ENCODE measurements at regions of chr1 and their contacts with region 1.

Region 1: GRCh38 chr1:9292361-9293240 is at the start of gene SPSB1:
- DNase-seq: peak; percentile 86
- ATAC-seq: peak; percentile 68
- H3K4me3 ChIP-seq: peak within 1 kb of the TSS; percentile 41 to 70 (median 59)
- H3K4me3 Mint-ChIP-seq: peak within 1 kb of the TSS; percentile 64
- H3K27ac ChIP-seq: peak within 1 kb of the TSS in 1 of 2 donors; percentile 47
- H3K27ac Mint-ChIP-seq: peak within 1 kb of the TSS; percentile 72
- H3K4me1 ChIP-seq: peaks cover 6 to 23% of the 10 kb centered on the region in 2 donors
- H3K4me1 Mint-ChIP-seq: peaks cover 7% of the 10 kb centered on the region
- H3K27me3 ChIP-seq: no peaks in the 10 kb centered on the region
- H3K27me3 Mint-ChIP-seq: no peaks in the 10 kb centered on the region
- CTCF ChIP-seq: no peak
- total RNA-seq, gene SPSB1: 8.9 and 9.4 TPM in 2 replicates

Region 2: DNA sequence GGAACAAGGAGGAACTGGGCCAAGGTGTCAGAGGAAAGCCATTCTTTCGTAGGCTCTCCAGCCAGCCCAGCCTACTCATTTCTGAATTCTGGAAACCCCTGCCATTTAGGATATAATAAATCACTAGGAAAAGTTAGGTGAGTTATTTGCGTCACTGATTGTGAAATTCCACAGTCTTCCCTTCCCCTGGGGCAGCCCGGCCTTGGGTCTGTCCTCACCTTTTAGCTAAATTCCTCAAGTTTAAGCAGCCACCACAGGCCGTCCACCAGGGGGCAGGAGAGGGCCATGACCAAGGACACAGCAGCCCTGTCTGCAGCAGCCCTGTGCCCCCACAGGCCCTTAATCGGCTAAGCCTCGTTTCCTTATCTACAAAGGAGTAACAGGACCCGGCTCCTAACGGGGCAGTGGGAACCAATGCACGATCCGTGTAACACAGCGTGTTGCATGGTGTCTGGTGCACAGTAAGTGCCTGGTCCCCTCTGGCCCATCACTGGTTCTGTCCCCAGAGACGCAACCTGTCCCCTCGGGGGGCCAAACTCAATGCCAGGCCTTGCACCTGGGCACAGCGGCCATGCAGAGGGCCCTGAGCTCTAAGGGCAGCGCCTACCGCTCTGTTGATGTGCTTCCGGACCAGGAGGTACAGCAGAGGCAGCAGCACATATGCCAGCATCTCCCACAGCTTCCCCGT is 181.8 kb before region 1 on chr1:
- CTCF ChIA-PET with region 1: interaction called, 15 read pairs
- POLR2A ChIA-PET with region 1: no interaction called
- intact Hi-C with region 1: no loop called
- DNase-seq: peak; percentile 85
- ATAC-seq: peak; percentile 95
- H3K4me3 ChIP-seq: no peak overlapping the region
- H3K4me3 Mint-ChIP-seq: no peak overlapping the region
- H3K27ac ChIP-seq: no peak overlapping the region
- H3K27ac Mint-ChIP-seq: no peak overlapping the region
- H3K4me1 ChIP-seq: peaks cover 0 to 5% of the 10 kb centered on the region in 2 donors
- H3K4me1 Mint-ChIP-seq: peaks cover 2% of the 10 kb centered on the region
- H3K27me3 ChIP-seq: no peaks in the 10 kb centered on the region
- H3K27me3 Mint-ChIP-seq: no peaks in the 10 kb centered on the region
- CTCF ChIP-seq: peak; percentile 91

Region 3: DNA sequence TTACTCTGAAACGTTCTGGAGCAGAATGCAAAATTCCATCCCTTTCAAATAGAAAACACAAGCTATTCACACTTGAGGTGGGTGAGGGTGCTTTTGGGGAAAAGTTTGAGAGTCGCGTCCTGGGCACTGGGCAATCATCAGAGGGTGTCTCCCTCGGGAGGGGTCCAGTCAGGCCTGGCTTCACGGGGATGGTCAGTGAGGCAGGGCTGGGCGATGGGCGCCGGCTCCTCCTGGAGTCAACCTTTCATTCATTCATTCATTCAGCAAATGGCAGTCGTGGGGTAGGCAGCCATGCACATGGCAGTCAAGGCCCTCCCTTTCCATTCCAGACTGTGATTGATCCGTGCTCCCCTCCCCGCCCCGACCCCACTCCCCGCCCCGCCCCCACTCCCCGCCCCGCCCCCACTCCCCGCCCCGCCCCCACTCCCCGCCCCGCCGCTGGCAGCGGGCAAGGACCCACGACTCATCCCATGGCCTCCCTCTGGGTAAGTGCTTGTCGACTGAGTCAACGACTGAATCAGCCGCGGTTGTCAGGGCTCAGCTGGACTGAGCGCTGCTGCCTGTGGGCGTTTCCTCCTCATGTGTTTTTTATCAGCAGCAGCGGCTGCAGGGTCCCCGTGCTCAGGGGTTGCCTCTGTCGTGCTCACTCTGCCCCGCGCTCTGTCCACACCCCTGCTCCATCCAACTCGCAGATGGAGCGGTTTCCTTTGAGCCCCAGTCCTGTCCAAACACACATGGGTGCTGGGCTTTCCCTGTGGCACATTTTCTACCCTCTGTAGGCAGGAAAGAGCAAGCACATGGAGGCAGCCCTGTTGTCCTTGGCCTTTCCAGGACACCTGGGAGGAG is 12.4 kb before region 1 on chr1:
- CTCF ChIA-PET with region 1: interaction called, 10 read pairs
- POLR2A ChIA-PET with region 1: no interaction called
- intact Hi-C with region 1: no loop called
- DNase-seq: no peak
- ATAC-seq: no peak
- H3K4me3 ChIP-seq: no peak overlapping the region
- H3K4me3 Mint-ChIP-seq: no peak overlapping the region
- H3K27ac ChIP-seq: no peak overlapping the region
- H3K27ac Mint-ChIP-seq: no peak overlapping the region
- H3K4me1 ChIP-seq: peaks cover 0 to 20% of the 10 kb centered on the region in 2 donors
- H3K4me1 Mint-ChIP-seq: peaks cover 23% of the 10 kb centered on the region
- H3K27me3 ChIP-seq: peaks cover 0 to 14% (median 4%) of the 10 kb centered on the region in 4 experiments
- H3K27me3 Mint-ChIP-seq: peaks cover 14% of the 10 kb centered on the region
- CTCF ChIP-seq: no peak

Region 4: DNA sequence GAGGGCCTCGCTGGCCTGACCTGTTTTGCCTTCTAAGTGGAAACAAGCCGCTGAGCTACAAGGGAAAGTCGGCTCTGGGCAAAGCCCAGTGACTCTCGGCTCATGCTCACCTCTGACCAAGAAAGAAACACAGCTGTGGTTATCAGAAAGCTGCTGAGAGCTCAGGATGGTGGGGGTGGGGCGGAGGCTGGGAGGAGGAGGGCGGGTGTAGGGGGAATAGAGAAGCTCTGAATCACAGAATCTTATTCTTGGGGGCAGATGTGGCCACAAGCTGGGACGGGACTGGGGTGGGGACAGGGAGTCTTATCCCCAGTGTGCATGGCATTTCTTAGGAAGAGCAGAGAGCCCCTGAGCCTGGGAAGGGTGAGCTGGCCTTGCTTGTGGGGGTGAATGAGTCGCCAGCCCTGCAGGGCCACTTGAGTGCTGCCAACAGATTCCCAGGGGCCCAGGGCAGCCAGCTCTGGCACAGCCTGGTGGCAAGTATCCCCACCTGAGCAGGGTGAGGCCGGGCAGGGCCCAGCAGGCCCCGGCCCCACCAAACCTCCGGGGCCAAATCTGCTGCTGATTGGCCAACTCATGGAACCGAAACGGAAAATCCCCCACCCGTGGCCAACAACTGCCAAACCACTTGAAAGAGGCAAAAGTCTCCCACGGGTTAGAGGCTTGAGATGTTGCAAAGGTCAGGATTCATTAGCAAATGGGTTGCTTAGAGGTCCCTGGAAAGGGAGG is 120.7 kb after region 1 on chr1:
- CTCF ChIA-PET with region 1: interaction called, 13 read pairs
- POLR2A ChIA-PET with region 1: interaction called, 10 read pairs
- intact Hi-C with region 1: loop called (anchors 5 kb)
- DNase-seq: peak; percentile 72
- ATAC-seq: peak; percentile 73
- H3K4me3 ChIP-seq: peak overlapping the region in 3 of 5 experiments; percentile 12 to 27 (median 12)
- H3K4me3 Mint-ChIP-seq: peak overlapping the region; percentile 49
- H3K27ac ChIP-seq: peak overlapping the region; percentile 41 to 67
- H3K27ac Mint-ChIP-seq: peak overlapping the region; percentile 85
- H3K4me1 ChIP-seq: peaks cover 35 to 59% of the 10 kb centered on the region in 2 donors
- H3K4me1 Mint-ChIP-seq: peaks cover 51% of the 10 kb centered on the region
- H3K27me3 ChIP-seq: no peaks in the 10 kb centered on the region
- H3K27me3 Mint-ChIP-seq: no peaks in the 10 kb centered on the region
- CTCF ChIP-seq: no peak

Region 5: DNA sequence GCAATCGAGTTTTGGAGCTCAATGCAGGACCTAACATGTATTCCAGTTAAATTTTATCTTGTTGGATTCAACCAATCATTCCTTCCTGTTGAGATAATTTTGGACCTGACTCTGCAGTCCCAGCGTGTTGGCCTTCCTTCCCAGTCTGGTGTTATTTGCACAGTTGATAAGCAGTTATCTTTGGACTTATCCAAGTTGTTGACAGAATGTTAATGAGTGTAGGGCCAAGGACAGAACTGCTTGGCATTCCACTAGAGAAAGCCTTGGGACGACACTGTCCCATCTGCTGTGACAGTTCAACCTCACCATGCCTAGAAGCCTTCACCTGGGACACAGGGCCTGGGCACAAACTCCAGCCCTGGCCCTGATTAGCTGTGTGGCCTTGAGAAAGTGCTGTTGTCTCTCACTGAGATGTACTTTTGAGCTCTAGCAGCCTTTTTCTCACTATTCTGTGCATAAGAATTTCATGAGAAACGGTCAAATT is 142.6 kb after region 1 on chr1:
- CTCF ChIA-PET with region 1: interaction called, 22 read pairs
- POLR2A ChIA-PET with region 1: interaction called, 6 read pairs
- intact Hi-C with region 1: no loop called
- DNase-seq: no peak
- ATAC-seq: no peak
- H3K4me3 ChIP-seq: no peak overlapping the region
- H3K4me3 Mint-ChIP-seq: no peak overlapping the region
- H3K27ac ChIP-seq: no peak overlapping the region
- H3K27ac Mint-ChIP-seq: no peak overlapping the region
- H3K4me1 ChIP-seq: no peaks in the 10 kb centered on the region
- H3K4me1 Mint-ChIP-seq: peaks cover 2% of the 10 kb centered on the region
- H3K27me3 ChIP-seq: no peaks in the 10 kb centered on the region
- H3K27me3 Mint-ChIP-seq: peaks cover 7% of the 10 kb centered on the region
- CTCF ChIP-seq: no peak

Region 6: GRCh38 chr1:9455487-9456234 is 163.1 kb after region 1 on chr1:
- CTCF ChIA-PET with region 1: interaction called, 352 read pairs
- POLR2A ChIA-PET with region 1: interaction called, 9 read pairs
- intact Hi-C with region 1: no loop called
- DNase-seq: peak; percentile 80
- ATAC-seq: peak; percentile 77
- H3K4me3 ChIP-seq: no peak overlapping the region
- H3K4me3 Mint-ChIP-seq: no peak overlapping the region
- H3K27ac ChIP-seq: no peak overlapping the region
- H3K27ac Mint-ChIP-seq: no peak overlapping the region
- H3K4me1 ChIP-seq: peaks cover 0 to 3% of the 10 kb centered on the region in 2 donors
- H3K4me1 Mint-ChIP-seq: peaks cover 3% of the 10 kb centered on the region
- H3K27me3 ChIP-seq: no peaks in the 10 kb centered on the region
- H3K27me3 Mint-ChIP-seq: no peaks in the 10 kb centered on the region
- CTCF ChIP-seq: peak; percentile 92